Mammary epithelial cell (primary cell): ENCODE measurements at regions of chr21 and their contacts with region 1.

Region 1: DNA sequence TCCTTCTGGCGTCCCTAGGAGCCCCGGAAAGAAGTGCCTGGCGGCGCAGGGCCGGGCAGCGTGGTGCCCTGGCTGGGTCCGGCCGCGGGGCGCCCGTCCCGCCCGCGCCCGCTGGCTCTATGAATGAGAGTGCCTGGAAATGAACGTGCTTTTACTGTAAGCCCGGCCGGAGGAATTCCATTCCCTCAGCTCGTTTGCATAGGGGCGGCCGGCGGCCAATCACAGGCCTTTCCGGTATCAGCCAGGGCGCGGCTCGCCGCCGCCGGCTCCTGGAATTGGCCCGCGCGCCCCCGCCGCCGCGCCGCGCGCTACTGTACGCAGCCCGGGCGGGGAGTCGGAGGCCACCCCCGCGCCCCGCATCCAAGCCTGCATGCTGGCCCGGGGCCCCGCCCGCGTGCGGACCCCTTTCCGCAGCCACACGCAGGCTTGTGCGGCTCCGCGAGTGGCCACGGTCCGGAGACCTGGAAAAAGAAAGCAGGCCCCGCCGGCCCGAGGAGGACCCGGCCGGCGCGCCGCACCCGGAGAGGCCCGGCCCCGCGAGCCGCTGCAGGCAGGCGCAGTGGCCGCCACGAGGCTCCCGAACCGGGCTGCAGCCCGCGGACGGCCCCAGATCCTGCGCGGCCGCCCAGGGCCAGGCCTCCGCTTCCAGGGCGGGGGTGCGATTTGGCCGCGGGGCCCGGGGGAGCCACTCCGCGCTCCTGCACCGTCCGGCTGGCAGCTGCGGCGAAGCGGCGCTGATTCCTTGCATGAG is 160.4 kb downstream of the RUNX1 start:
- DNase-seq: peak; percentile 93
- H3K4me3 ChIP-seq: peak overlapping the region; percentile 89 to 99 (median 94)
- H3K27ac ChIP-seq: peak overlapping the region; percentile 97
- H3K4me1 ChIP-seq: peaks cover 19% of the 10 kb centered on the region
- H3K27me3 ChIP-seq: no peaks in the 10 kb centered on the region
- CTCF ChIP-seq: no peak

Region 2: DNA sequence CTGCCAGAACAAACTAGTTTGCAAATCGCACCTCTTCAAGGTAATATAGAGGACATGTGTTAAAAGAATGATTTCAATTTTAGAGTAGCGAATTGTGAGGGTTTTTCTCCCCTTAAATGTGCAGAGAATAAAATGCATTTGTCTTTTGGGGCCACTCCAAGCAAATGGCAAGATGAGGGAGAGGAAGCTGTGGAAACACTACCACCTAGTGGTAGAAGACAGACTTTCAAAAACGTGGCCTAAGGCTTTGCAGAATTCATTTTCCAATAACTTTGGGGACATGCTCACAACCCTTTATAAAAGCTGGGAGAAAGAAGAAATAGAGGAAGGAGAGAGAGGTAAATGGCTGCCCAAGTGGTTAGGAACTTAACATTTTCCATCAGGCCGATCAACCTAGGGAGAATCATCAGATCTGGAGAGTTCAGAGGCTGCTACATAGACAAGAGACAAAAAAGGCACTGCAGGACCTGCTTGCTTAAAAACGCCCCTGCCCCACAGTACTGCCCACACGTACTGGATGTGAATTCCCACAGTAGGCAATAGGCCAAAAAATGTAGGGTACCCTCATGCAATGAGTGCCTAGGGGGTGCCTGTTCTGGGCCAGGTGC is 258.1 kb before region 1 on chr21:
- CTCF ChIA-PET with region 1: no interaction called
- dilution Hi-C with region 1: no loop called
- in situ Hi-C with region 1: no loop called
- intact Hi-C with region 1: no loop called
- DNase-seq: peak; percentile 42
- H3K4me3 ChIP-seq: no peak overlapping the region
- H3K27ac ChIP-seq: no peak overlapping the region
- H3K4me1 ChIP-seq: no peaks in the 10 kb centered on the region
- H3K27me3 ChIP-seq: peaks cover 5% of the 10 kb centered on the region
- CTCF ChIP-seq: peak; percentile 71 to 81

Region 3: GRCh38 chr21:34745557-34746255 is 143.0 kb before region 1 on chr21:
- CTCF ChIA-PET with region 1: no interaction called
- dilution Hi-C with region 1: no loop called
- in situ Hi-C with region 1: no loop called
- intact Hi-C with region 1: loop called (anchors 1 kb)
- DNase-seq: peak; percentile 63
- H3K4me3 ChIP-seq: no peak overlapping the region
- H3K27ac ChIP-seq: no peak overlapping the region
- H3K4me1 ChIP-seq: peaks cover 31% of the 10 kb centered on the region
- H3K27me3 ChIP-seq: no peaks in the 10 kb centered on the region
- CTCF ChIP-seq: peak; percentile 84 to 96

Region 4: DNA sequence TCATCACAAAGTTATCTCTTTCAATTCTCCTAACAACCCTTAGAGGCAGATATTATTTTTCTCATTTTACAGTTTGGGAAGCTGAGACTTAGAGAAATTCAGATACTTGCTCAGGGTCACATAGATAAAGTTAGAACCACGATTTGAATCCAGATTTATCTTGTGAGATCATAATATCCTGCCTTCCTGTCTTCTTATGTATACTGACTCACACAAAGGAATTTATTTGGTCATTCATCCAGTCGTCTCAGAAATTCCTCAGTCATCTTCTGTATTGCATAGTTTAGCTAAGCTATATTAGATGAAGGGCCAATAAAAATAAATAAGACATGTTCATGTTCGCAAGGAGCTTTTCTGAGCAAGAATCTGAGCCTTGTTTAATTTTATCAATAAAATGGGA is 196.1 kb after region 1 on chr21:
- CTCF ChIA-PET with region 1: no interaction called
- dilution Hi-C with region 1: no loop called
- in situ Hi-C with region 1: no loop called
- intact Hi-C with region 1: loop called (anchors 5 kb)
- DNase-seq: peak; percentile 76
- H3K4me3 ChIP-seq: no peak overlapping the region
- H3K27ac ChIP-seq: peak overlapping the region; percentile 81
- H3K4me1 ChIP-seq: peaks cover 34% of the 10 kb centered on the region
- H3K27me3 ChIP-seq: no peaks in the 10 kb centered on the region
- CTCF ChIP-seq: no peak

Region 5: GRCh38 chr21:35217504-35218060 is 328.8 kb after region 1 on chr21:
- CTCF ChIA-PET with region 1: no interaction called
- dilution Hi-C with region 1: no loop called
- in situ Hi-C with region 1: no loop called
- intact Hi-C with region 1: loop called (anchors 1 kb)
- DNase-seq: peak; percentile 100
- H3K4me3 ChIP-seq: no peak overlapping the region
- H3K27ac ChIP-seq: peak overlapping the region; percentile 98
- H3K4me1 ChIP-seq: peaks cover 28% of the 10 kb centered on the region
- H3K27me3 ChIP-seq: no peaks in the 10 kb centered on the region
- CTCF ChIP-seq: no peak

Region 6: GRCh38 chr21:35408401-35408800 is 519.7 kb after region 1 on chr21:
- CTCF ChIA-PET with region 1: interaction called, 21 read pairs
- dilution Hi-C with region 1: no loop called
- in situ Hi-C with region 1: loop called in 1 of 2 experiments (anchors 5 kb)
- intact Hi-C with region 1: no loop called
- DNase-seq: peak; percentile 37
- H3K4me3 ChIP-seq: no peak overlapping the region
- H3K27ac ChIP-seq: no peak overlapping the region
- H3K4me1 ChIP-seq: no peaks in the 10 kb centered on the region
- H3K27me3 ChIP-seq: no peaks in the 10 kb centered on the region
- CTCF ChIP-seq: no peak

Region 7: DNA sequence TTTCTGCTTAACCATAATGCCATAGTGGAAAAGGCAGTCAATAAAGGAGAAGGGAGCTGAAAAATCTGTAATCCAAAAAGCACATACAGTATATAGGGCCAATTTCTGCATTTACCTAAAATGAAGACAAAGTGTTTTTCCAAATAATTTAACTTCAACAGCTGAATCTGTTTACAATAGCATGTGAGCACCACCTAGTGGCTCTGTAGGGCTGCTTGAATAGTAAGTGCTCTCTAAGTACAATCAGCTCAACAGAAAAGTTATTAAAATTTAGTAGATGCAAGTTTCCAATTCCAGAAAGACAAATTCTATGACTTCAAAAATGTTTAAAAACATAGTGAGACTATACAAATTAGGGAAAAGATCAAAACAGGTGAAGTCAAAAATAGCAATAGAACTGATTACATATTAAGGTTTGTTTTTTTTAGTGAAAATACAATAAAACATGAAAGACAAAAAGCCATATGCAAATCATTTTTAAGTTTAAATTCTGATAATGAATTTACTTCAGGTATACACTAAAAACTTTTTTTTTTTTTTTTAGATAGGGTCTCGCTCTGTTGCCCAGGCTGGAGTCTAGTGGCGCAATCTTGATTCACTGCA is 951.6 kb after region 1 on chr21:
- CTCF ChIA-PET with region 1: no interaction called
- dilution Hi-C with region 1: no loop called
- in situ Hi-C with region 1: no loop called
- intact Hi-C with region 1: loop called (anchors 1 kb)
- DNase-seq: peak; percentile 59
- H3K4me3 ChIP-seq: no peak overlapping the region
- H3K27ac ChIP-seq: no peak overlapping the region
- H3K4me1 ChIP-seq: peaks cover 2% of the 10 kb centered on the region
- H3K27me3 ChIP-seq: no peaks in the 10 kb centered on the region
- CTCF ChIP-seq: peak; percentile 85 to 92

Region 8: GRCh38 chr21:36028127-36029069 is 1139.7 kb after region 1 on chr21:
- CTCF ChIA-PET with region 1: no interaction called
- dilution Hi-C with region 1: no loop called
- in situ Hi-C with region 1: loop called in 1 of 2 experiments (anchors 25 kb)
- intact Hi-C with region 1: loop called (anchors 1 kb)
- DNase-seq: peak; percentile 70
- H3K4me3 ChIP-seq: no peak overlapping the region
- H3K27ac ChIP-seq: no peak overlapping the region
- H3K4me1 ChIP-seq: peaks cover 11% of the 10 kb centered on the region
- H3K27me3 ChIP-seq: no peaks in the 10 kb centered on the region
- CTCF ChIP-seq: peak; percentile 96 to 97